CD4-positive, alpha-beta memory T cell (primary cell): ENCODE measurements at regions of chr11 and their contacts with region 1.

Region 1: GRCh38 chr11:61161190-61162091 is at the start of gene VPS37C:
- DNase-seq: peak; percentile 87 to 93 (median 91)
- H3K4me3 ChIP-seq: peak within 1 kb of the TSS; percentile 69 to 73
- H3K4me3 Mint-ChIP-seq: peak within 1 kb of the TSS; percentile 89 to 91 (median 90)
- H3K27ac ChIP-seq: peak within 1 kb of the TSS; percentile 68
- H3K27ac Mint-ChIP-seq: peak within 1 kb of the TSS; percentile 95 to 98 (median 96)
- H3K4me1 ChIP-seq: peaks cover 18% of the 10 kb centered on the region
- H3K4me1 Mint-ChIP-seq: peaks cover 21 to 51% (median 33%) of the 10 kb centered on the region in 4 donors
- H3K27me3 ChIP-seq: no peaks in the 10 kb centered on the region
- H3K27me3 Mint-ChIP-seq: no peaks in the 10 kb centered on the region
- total RNA-seq, gene VPS37C: 7.3 to 7.9 TPM

Region 2: GRCh38 chr11:60841797-60842667 is 319.4 kb before region 1 on chr11 and contains the start of gene CCDC86:
- CTCF ChIA-PET with region 1: no interaction called
- POLR2A ChIA-PET with region 1: no interaction called
- intact Hi-C with region 1: loop called (anchors 1 kb)
- DNase-seq: peak; percentile 97 to 100 (median 98)
- H3K4me3 ChIP-seq: peak within 1 kb of the TSS; percentile 69 to 87
- H3K4me3 Mint-ChIP-seq: peak within 1 kb of the TSS; percentile 89 to 99 (median 96)
- H3K27ac ChIP-seq: peak within 1 kb of the TSS; percentile 68
- H3K27ac Mint-ChIP-seq: peak within 1 kb of the TSS; percentile 93 to 99 (median 97)
- H3K4me1 ChIP-seq: peaks cover 38% of the 10 kb centered on the region
- H3K4me1 Mint-ChIP-seq: peaks cover 31 to 53% (median 43%) of the 10 kb centered on the region in 4 donors
- H3K27me3 ChIP-seq: no peaks in the 10 kb centered on the region
- H3K27me3 Mint-ChIP-seq: no peaks in the 10 kb centered on the region
- total RNA-seq, gene CCDC86: 7.5 to 9.6 TPM

Region 3: DNA sequence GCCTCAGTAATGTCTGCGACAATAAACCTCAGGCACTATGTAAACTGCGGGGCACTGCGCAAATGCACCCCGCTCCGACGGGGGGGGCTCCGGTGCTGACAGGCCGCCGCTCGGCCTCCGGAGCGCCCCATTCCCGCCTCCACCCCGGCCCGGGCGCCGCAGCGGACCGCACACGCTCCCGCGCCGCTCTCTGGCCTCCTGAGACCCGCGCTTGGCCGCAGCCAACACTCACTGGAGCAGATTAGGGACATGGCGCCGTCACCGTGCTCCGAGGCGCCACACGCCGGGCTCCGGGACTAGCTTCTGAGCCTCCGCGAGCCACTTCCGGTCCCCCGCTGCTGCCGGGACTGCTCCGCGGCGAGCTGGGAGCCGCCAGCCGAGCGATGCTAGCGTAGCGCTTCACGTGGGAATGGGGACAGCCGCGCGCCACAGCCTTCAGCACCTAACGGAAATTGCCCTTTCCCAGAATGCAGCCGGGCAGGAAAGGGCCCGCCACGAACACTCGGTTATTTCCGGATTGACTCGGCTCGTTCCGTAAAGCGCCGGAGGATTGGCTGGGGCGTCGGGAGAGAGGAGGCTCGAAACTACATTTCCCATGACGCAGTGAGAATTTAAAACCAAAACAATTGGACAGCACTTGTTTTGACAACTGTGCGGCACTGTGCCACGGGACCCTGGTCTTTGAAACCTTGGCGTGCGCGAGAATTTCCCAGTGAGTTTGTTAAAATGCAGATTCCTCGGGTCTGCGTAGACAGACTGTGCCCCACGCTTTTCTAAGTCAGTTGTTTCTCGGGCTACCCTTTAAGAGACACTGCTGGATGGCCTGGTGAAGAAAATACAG is 255.1 kb before region 1 on chr11 and contains the start of gene PRPF19:
- CTCF ChIA-PET with region 1: no interaction called
- POLR2A ChIA-PET with region 1: interaction called, 3 read pairs
- intact Hi-C with region 1: loop called (anchors 1 kb)
- DNase-seq: peak; percentile 99 to 100 (median 99)
- H3K4me3 ChIP-seq: peak within 1 kb of the TSS; percentile 85
- H3K4me3 Mint-ChIP-seq: peak within 1 kb of the TSS; percentile 82 to 94 (median 91)
- H3K27ac ChIP-seq: peak within 1 kb of the TSS; percentile 85
- H3K27ac Mint-ChIP-seq: peak within 1 kb of the TSS; percentile 94 to 99 (median 99)
- H3K4me1 ChIP-seq: peaks cover 38% of the 10 kb centered on the region
- H3K4me1 Mint-ChIP-seq: peaks cover 19 to 60% (median 38%) of the 10 kb centered on the region in 4 donors
- H3K27me3 ChIP-seq: no peaks in the 10 kb centered on the region
- H3K27me3 Mint-ChIP-seq: no peaks in the 10 kb centered on the region
- total RNA-seq, gene PRPF19: 97.4 to 99.2 TPM

Region 4: GRCh38 chr11:60913793-60914632 is 247.4 kb before region 1 on chr11 and contains the start of gene TMEM109:
- CTCF ChIA-PET with region 1: interaction called, 3 read pairs
- POLR2A ChIA-PET with region 1: interaction called, 5 read pairs
- intact Hi-C with region 1: loop called (anchors 1 kb)
- DNase-seq: peak; percentile 90 to 92 (median 91)
- H3K4me3 ChIP-seq: peak within 1 kb of the TSS; percentile 79 to 96
- H3K4me3 Mint-ChIP-seq: peak within 1 kb of the TSS; percentile 92 to 100 (median 98)
- H3K27ac ChIP-seq: peak within 1 kb of the TSS; percentile 96
- H3K27ac Mint-ChIP-seq: peak within 1 kb of the TSS; percentile 87 to 99 (median 98)
- H3K4me1 ChIP-seq: peaks cover 47% of the 10 kb centered on the region
- H3K4me1 Mint-ChIP-seq: peaks cover 31 to 65% (median 44%) of the 10 kb centered on the region in 4 donors
- H3K27me3 ChIP-seq: no peaks in the 10 kb centered on the region
- H3K27me3 Mint-ChIP-seq: no peaks in the 10 kb centered on the region
- total RNA-seq, gene TMEM109: 66.9 to 68.0 TPM

Region 5: DNA sequence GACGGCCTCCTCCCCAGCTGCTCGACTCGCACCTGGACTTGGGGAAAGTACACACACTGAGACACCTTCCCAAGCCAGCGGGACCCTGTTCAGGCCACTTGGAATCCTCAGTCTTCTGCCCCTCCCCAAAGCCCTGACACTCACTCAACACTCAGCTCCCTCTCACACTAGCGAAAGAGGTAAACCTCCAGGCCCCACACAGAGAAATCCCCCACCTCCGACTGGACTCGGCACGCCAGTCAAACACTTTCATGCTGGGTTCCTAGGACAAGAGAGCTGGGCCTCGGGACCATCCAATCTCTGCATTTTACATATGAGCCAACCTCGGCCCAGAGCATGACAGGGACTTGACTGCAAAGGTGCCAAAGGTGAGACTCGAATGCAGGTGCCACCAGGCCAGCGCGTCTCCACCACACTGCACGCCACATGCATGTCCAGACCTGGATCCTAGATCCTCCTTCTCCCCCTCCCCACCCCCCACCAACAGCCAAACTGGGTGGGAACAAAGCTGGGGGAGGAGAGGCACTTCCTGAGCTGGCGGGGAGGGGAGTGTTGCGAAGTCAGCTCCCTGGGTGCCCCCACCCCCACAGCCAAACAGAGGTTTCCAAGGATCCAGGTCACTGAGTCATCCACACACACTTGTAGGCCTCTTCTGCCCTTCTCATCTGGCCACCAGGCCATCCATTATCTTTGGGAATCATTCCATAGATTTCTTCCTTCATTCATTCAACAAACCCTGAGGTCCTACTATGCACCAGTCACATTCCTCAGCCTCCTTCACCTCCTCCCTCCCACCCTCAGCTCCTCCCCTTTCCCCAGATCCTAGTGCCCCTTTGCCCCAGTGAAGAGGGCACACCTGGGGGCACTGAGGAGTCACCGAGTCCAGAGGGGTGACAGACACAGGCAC is 69.8 kb before region 1 on chr11:
- CTCF ChIA-PET with region 1: no interaction called
- POLR2A ChIA-PET with region 1: no interaction called
- intact Hi-C with region 1: loop called (anchors 5 kb)
- DNase-seq: peak in 1 of 5 donors; percentile 74
- H3K4me3 ChIP-seq: peak overlapping the region in 1 of 2 donors; percentile 16
- H3K4me3 Mint-ChIP-seq: peak overlapping the region; percentile 71 to 89 (median 80)
- H3K27ac ChIP-seq: peak overlapping the region; percentile 87
- H3K27ac Mint-ChIP-seq: peak overlapping the region; percentile 95 to 99 (median 97)
- H3K4me1 ChIP-seq: peaks cover 52% of the 10 kb centered on the region
- H3K4me1 Mint-ChIP-seq: peaks cover 44 to 75% (median 50%) of the 10 kb centered on the region in 4 donors
- H3K27me3 ChIP-seq: no peaks in the 10 kb centered on the region
- H3K27me3 Mint-ChIP-seq: no peaks in the 10 kb centered on the region

Region 6: DNA sequence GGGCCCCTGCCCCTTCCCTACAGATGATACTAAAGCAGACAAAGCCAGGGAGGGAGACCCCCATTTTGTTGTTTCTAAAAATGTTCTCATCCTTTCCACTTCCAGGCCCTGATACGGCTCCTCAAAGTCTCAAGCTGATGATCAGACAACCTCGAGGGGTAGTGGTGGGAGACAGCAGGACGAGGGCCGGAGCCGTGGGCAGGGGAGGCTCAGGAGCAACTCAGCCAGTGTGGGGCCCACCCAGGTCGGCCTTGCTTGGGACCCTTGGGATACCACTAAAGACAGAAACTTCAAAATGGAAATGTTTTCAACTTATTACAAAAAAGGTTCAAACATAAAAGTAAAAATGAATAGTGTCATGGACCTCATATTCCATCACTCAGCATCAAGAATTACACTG is 15.0 kb after region 1 on chr11:
- CTCF ChIA-PET with region 1: no interaction called
- POLR2A ChIA-PET with region 1: no interaction called
- intact Hi-C with region 1: no loop called
- DNase-seq: no peak
- H3K4me3 ChIP-seq: no peak overlapping the region
- H3K4me3 Mint-ChIP-seq: no peak overlapping the region
- H3K27ac ChIP-seq: no peak overlapping the region
- H3K27ac Mint-ChIP-seq: no peak overlapping the region
- H3K4me1 ChIP-seq: peaks cover 14% of the 10 kb centered on the region
- H3K4me1 Mint-ChIP-seq: peaks cover 10 to 13% (median 12%) of the 10 kb centered on the region in 4 donors
- H3K27me3 ChIP-seq: no peaks in the 10 kb centered on the region
- H3K27me3 Mint-ChIP-seq: peaks cover 0 to 1% of the 10 kb centered on the region in 2 donors

Region 7: GRCh38 chr11:61187505-61188130 is 26.2 kb after region 1 on chr11:
- CTCF ChIA-PET with region 1: interaction called, 16 read pairs
- POLR2A ChIA-PET with region 1: no interaction called
- intact Hi-C with region 1: no loop called
- DNase-seq: peak; percentile 66 to 73 (median 71)
- H3K4me3 ChIP-seq: no peak overlapping the region
- H3K4me3 Mint-ChIP-seq: no peak overlapping the region
- H3K27ac ChIP-seq: no peak overlapping the region
- H3K27ac Mint-ChIP-seq: no peak overlapping the region
- H3K4me1 ChIP-seq: no peaks in the 10 kb centered on the region
- H3K4me1 Mint-ChIP-seq: peaks cover 0 to 3% (median 0%) of the 10 kb centered on the region in 4 donors
- H3K27me3 ChIP-seq: no peaks in the 10 kb centered on the region
- H3K27me3 Mint-ChIP-seq: peaks cover 3 to 9% of the 10 kb centered on the region in 2 donors